IMR-90 (cell line): ENCODE measurements at regions of chr9 and their contacts with region 1.

Region 1: DNA sequence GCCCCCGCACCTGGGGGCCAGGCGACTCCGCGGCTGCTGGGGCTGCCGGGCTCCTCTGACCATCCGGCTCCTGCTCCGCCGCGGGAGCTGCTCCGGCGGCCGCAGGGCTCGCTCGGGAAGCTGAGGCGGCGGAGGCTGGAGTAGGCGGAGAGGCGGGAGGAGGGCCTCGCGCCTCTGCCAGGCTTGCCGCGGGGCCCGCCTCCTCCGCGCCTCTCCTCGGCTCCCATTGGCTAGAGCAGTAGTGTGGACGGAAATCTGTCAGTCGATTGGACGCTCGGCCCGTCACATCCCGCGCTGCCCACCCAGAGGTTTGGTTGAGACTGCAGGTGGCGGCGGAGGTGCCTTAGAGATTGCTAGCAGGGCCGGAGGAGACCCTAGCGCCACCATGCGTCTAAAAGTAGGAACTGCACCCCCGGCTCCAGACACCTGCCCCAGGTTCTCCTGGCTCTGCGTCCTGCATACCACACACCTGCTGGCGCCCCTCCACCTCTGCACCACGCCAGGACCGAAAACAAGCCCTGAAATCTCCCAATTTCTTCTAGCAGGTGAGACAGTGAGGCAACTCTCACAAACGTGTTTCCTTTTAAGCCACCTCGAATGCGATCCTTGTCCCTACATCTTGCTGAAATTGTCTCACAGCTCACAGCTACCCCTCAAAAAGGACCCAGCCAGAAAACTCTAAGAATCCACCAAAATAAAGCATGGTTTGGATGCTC is at the start of gene SCAI:
- DNase-seq: peak; percentile 99
- ATAC-seq: peak; percentile 97
- H3K4me3 ChIP-seq: peak within 1 kb of the TSS; percentile 60
- H3K27ac ChIP-seq: peak within 1 kb of the TSS; percentile 5; the same call in 1 of the 2 replicates
- H3K4me1 ChIP-seq: peaks cover 5% of the 10 kb centered on the region; the same call in 1 of the 2 replicates
- H3K27me3 ChIP-seq: no peaks in the 10 kb centered on the region
- CTCF ChIP-seq: peak; percentile 96
- POLR2A ChIP-seq: peak; percentile 57; the same call in 1 of the 2 replicates
- RAD21 ChIP-seq: peak; percentile 87
- total RNA-seq, gene SCAI: 13.3 and 14.5 TPM in 2 replicates

Region 2: GRCh38 chr9:124771021-124771866 is 372.3 kb before region 1 on chr9 and contains the start of gene NR6A1:
- CTCF ChIA-PET with region 1: no interaction called
- POLR2A ChIA-PET with region 1: no interaction called
- dilution Hi-C with region 1: no loop called
- in situ Hi-C with region 1: loop called (anchors 10 kb)
- intact Hi-C with region 1: loop called (anchors 2 kb)
- DNase-seq: peak; percentile 95
- ATAC-seq: peak; percentile 93
- H3K4me3 ChIP-seq: peak within 1 kb of the TSS; percentile 58
- H3K27ac ChIP-seq: peak within 1 kb of the TSS; percentile 16
- H3K4me1 ChIP-seq: peaks cover 2% of the 10 kb centered on the region; the same call in 1 of the 2 replicates
- H3K27me3 ChIP-seq: peaks cover 40% of the 10 kb centered on the region
- CTCF ChIP-seq: no peak; the same call in 1 of the 2 replicates
- POLR2A ChIP-seq: no peak
- RAD21 ChIP-seq: no peak
- total RNA-seq, gene NR6A1: 0.28 and 0.36 TPM in 2 replicates

Region 3: DNA sequence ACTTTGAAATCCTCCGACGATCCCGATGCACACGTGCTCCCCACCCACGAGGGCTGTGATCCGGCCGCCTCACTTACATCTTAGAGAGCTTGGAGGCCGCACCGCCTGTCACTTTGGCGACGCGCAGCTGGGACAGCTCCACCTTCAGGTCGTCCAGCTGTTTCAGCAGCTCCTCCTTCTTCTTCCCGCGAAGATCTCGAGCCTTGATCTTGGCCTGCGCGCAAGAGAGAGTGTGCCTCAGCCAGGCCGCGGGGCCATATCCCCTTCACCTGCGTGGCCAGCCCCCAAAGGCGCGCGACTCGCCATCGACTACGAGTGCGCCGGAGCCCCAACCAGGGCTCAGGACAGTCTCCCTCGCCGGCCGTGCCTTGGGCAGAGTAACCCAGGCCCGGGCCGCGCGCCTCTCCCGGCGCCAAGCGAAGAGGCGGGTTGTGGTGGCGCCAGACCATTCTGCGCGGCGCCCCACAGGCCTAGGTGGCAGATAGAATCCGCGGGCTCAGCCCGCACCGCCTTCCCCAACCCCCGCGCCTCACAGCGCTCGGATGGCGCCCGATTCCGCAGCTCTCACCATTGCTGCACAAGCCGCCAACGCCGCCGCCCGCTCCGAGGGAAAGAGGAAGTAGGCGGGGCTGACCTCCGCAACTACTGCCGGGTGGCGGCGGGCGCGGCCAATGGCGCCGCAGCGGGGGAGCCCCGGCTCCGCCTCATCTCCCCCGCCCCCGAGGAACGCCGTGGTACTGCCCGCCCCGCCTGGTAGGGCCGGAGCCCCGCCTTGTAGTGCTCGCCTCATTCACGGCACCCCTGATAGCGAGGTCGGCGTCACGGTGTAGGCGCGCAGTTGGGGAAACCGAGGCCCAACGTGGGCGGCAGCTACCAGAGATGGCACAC is 281.9 kb before region 1 on chr9 and contains the starts of genes ARPC5L and RPL35:
- CTCF ChIA-PET with region 1: no interaction called
- POLR2A ChIA-PET with region 1: no interaction called
- dilution Hi-C with region 1: no loop called
- in situ Hi-C with region 1: loop called (anchors 10 kb)
- intact Hi-C with region 1: no loop called
- DNase-seq: peak; percentile 89
- ATAC-seq: peak; percentile 98
- H3K4me3 ChIP-seq: peak within 1 kb of the TSS; percentile 78
- H3K27ac ChIP-seq: peak within 1 kb of the TSS; percentile 94
- H3K4me1 ChIP-seq: peaks cover 9% of the 10 kb centered on the region
- H3K27me3 ChIP-seq: no peaks in the 10 kb centered on the region
- CTCF ChIP-seq: 0 out of 2 replicates have a peak, but pooled peaks have one; percentile 13
- POLR2A ChIP-seq: peak; percentile 95
- RAD21 ChIP-seq: no peak
- total RNA-seq, gene ARPC5L: 11.1 and 19.7 TPM in 2 replicates
- total RNA-seq, gene RPL35: 881 and 1,151 TPM in 2 replicates

Region 4: DNA sequence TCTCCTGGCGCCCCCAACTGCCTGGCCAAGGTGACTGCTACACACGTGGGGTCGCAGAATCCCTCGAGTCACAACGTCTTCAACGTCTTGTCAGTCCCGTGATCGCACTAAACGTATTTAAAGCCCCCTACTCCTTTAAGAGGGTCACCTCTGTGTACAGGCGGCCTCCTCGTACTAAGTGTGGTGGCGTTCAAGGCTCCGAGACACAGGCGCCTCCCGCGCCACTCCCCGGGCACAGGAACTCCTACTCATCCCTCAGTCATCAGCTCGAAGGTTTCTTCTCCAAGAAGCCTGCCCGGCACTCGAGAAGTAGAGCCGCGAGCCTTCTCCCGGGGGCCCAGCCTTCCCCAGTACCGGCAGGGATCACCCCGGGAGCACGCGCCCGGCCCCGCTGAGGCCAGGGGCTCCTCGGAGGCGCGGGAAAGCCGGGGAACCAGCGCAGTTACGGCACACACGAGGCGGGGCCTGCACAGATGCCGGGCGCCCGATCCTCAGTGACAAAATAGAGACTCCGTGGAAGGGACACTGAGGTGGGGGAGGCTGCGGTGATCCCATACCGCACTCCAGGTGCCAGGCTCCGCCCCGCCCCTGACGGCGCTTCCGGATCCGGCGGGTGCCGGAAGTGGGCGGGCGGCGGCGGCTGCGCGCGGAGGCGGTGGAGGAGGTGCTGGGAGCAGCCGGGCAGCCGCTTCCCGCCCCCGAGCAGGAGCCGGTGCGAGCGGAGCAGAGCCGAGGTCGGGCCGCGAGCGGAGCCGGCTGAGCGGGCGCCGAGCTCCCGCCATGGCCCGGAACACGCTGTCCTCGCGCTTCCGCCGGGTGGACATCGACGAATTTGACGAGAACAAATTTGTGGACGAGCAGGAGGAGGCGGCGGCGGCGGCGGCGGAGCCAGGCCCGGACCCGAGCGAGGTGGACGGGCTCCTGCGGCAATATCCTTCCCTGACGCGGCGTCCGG is 274.7 kb before region 1 on chr9:
- CTCF ChIA-PET with region 1: no interaction called
- POLR2A ChIA-PET with region 1: no interaction called
- dilution Hi-C with region 1: no loop called
- in situ Hi-C with region 1: loop called (anchors 10 kb)
- intact Hi-C with region 1: loop called (anchors 2 kb)
- DNase-seq: peak; percentile 71
- ATAC-seq: peak; percentile 84
- H3K4me3 ChIP-seq: peak overlapping the region; percentile 69
- H3K27ac ChIP-seq: peak overlapping the region; percentile 94
- H3K4me1 ChIP-seq: peaks cover 22% of the 10 kb centered on the region
- H3K27me3 ChIP-seq: no peaks in the 10 kb centered on the region
- CTCF ChIP-seq: peak; percentile 31; the same call in 1 of the 2 replicates
- POLR2A ChIP-seq: peak; percentile 90
- RAD21 ChIP-seq: no peak

Region 5: GRCh38 chr9:124940693-124941453 is 202.7 kb before region 1 on chr9 and contains the start of gene GOLGA1:
- CTCF ChIA-PET with region 1: no interaction called
- POLR2A ChIA-PET with region 1: no interaction called
- dilution Hi-C with region 1: no loop called
- in situ Hi-C with region 1: loop called (anchors 5 kb)
- intact Hi-C with region 1: loop called (anchors 1 kb)
- DNase-seq: peak; percentile 93
- ATAC-seq: peak; percentile 89
- H3K4me3 ChIP-seq: peak within 1 kb of the TSS; percentile 84
- H3K27ac ChIP-seq: peak within 1 kb of the TSS; percentile 93
- H3K4me1 ChIP-seq: peaks cover 4% of the 10 kb centered on the region; the same call in 1 of the 2 replicates
- H3K27me3 ChIP-seq: no peaks in the 10 kb centered on the region
- CTCF ChIP-seq: 0 out of 2 replicates have a peak, but pooled peaks have one; percentile 1
- POLR2A ChIP-seq: peak; percentile 89
- RAD21 ChIP-seq: peak; percentile 4; the same call in 1 of the 2 replicates
- total RNA-seq, gene GOLGA1: 10.6 and 11.9 TPM in 2 replicates

Region 6: DNA sequence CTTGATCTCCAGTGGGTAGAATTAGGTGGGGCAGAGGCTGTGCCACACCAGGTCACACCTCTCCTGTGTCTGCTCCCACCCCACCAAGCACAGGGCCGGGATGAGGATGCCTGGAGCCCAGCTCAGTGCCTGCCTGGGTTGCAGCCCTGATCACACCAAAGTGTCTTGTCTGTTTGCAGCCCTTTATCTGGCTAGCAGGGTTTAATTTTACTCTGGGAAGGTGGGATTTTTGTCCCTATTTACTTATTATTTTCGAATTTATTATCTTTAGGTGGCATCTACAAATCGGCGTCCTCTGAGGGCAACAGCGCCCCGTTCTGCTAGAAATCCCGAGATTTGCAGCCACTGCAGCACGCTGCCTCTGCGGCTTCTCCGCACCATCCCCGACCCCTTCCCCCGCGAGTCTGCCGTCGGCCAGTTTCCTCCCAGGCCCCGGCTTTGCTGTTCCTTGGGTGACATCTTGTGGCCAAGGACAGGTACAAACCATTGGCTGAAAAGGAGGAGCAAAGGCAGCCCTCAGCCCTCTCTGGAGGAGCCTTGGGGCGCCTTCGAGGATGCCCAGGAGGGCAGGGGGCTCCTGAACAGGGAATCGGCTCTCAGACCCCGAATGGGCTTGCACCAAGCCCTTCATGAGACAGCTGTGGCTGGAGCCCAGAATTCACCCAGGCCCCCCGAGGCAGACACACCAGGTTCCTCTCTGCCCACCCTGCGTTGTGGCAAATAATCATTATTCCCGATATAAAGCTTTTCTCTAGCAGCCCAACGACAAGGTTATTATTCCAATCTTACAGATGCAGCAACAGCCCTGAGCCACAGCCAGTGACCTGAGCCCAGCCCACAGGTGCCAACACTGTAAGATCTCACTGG is 231.1 kb after region 1 on chr9:
- CTCF ChIA-PET with region 1: no interaction called
- POLR2A ChIA-PET with region 1: no interaction called
- dilution Hi-C with region 1: no loop called
- in situ Hi-C with region 1: no loop called
- intact Hi-C with region 1: loop called (anchors 1 kb)
- DNase-seq: peak; percentile 73
- ATAC-seq: peak; percentile 98
- H3K4me3 ChIP-seq: peak overlapping the region; percentile 24
- H3K27ac ChIP-seq: no peak overlapping the region
- H3K4me1 ChIP-seq: no peaks in the 10 kb centered on the region
- H3K27me3 ChIP-seq: peaks cover 17% of the 10 kb centered on the region; the same call in 1 of the 2 replicates
- CTCF ChIP-seq: peak; percentile 92
- POLR2A ChIP-seq: 0 out of 2 replicates have a peak, but pooled peaks have one; percentile 36
- RAD21 ChIP-seq: peak; percentile 96

Region 7: GRCh38 chr9:125538092-125538473 is 394.6 kb after region 1 on chr9:
- CTCF ChIA-PET with region 1: no interaction called
- POLR2A ChIA-PET with region 1: no interaction called
- dilution Hi-C with region 1: no loop called
- in situ Hi-C with region 1: no loop called
- intact Hi-C with region 1: no loop called
- DNase-seq: peak; percentile 95
- ATAC-seq: peak; percentile 97
- H3K4me3 ChIP-seq: no peak overlapping the region
- H3K27ac ChIP-seq: no peak overlapping the region
- H3K4me1 ChIP-seq: peaks cover 11% of the 10 kb centered on the region
- H3K27me3 ChIP-seq: no peaks in the 10 kb centered on the region
- CTCF ChIP-seq: no peak
- POLR2A ChIP-seq: no peak
- RAD21 ChIP-seq: no peak; the same call in 1 of the 2 replicates